H1 (cell line): ENCODE measurements at regions of chr13 and their contacts with region 1.

Region 1: DNA sequence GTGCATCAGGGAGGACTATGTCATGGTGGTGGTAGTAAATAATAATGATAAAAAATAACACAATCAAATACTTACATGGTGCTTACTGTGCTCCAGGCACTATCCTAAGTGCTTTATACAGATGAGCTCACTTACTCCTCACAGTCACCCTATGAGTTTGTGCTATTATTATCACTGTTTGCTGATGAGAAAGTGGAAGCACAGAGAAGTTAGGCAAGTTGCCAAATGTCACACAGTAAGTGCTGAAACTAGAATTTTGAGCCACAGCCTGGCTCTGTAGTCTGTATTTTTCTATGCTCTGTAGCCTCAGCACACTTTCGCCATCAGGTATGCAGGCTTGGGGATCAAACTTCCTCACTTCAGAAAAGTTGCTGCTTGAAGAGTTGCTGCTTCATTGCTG is 46.6 kb downstream of the HTR2A start:
- DNase-seq: no peak
- H3K4me3 ChIP-seq: no peak overlapping the region
- H3K27ac ChIP-seq: no peak overlapping the region
- H3K4me1 ChIP-seq: no peaks in the 10 kb centered on the region
- H3K27me3 ChIP-seq: no peaks in the 10 kb centered on the region
- CTCF ChIP-seq: no peak
- EP300 ChIP-seq: no peak
- POLR2A ChIP-seq: no peak
- RAD21 ChIP-seq: no peak

Region 2: DNA sequence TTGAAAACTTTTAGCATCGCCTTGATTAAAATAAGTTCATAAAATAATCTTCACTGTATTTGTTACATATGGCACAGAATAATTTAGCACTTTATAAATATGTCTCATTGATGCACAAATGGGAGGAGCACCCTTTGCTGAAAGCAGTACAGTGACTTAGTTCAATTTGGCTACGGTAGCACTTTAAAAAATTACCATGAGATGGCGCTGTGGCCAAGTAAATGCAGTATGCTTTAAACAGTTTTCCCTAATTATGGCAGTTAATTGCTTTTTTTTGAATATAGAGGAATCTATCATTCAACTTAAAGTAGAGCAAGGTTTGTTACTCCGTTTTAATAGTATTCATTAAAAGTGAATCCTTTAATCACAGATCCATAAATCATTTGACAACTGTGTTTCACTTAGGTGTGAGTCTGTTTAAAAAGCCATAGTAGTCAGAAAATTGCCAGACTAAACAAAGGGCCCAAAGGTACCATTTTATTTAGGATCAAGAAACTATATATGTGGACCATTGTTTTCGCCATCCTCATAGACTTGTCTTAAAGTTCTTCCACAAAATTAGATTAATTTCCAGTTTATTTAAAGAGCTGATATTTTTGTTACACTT is 18.5 kb before region 1 on chr13:
- CTCF ChIA-PET with region 1: interaction called, 18 read pairs
- POLR2A ChIA-PET with region 1: no interaction called
- DNase-seq: peak in 1 of 2 experiments; percentile 67
- H3K4me3 ChIP-seq: no peak overlapping the region
- H3K27ac ChIP-seq: no peak overlapping the region
- H3K4me1 ChIP-seq: no peaks in the 10 kb centered on the region
- H3K27me3 ChIP-seq: no peaks in the 10 kb centered on the region
- CTCF ChIP-seq: peak in 2 of 3 experiments; percentile 54 to 65; a peak in 2 of 4 replicates
- EP300 ChIP-seq: no peak
- POLR2A ChIP-seq: no peak
- RAD21 ChIP-seq: peak; percentile 87 to 90